ENCODE measurements at regions of chr1 and their contacts with region 1.

Region 1: GRCh38 chr1:221741711-221742554 is at the start of gene DUSP10:
- DNase-seq: peak; percentile 100
- H3K4me3 ChIP-seq: peak within 1 kb of the TSS; percentile 67 to 82 (median 70)
- H3K27ac ChIP-seq: peak within 1 kb of the TSS; percentile 96 to 99 (median 97)
- H3K4me1 ChIP-seq: peaks cover 0 to 45% (median 36%) of the 10 kb centered on the region in 4 donors
- H3K27me3 ChIP-seq: no peaks in the 10 kb centered on the region
- CTCF ChIP-seq: no peak
- EP300 ChIP-seq: peak in 2 of 4 donors; percentile 44 to 58
- POLR2A ChIP-seq: peak; percentile 88 to 95
- total RNA-seq, gene DUSP10: 11.4 to 19.9 (median 15.7) TPM

Region 2: GRCh38 chr1:221035680-221036153 is 706.2 kb before region 1 on chr1:
- intact Hi-C with region 1: loop called (anchors 10 kb)
- DNase-seq: no peak
- H3K4me3 ChIP-seq: no peak overlapping the region
- H3K27ac ChIP-seq: peak overlapping the region in 2 of 4 donors; percentile 33 to 38
- H3K4me1 ChIP-seq: peaks cover 0 to 47% (median 39%) of the 10 kb centered on the region in 4 donors
- H3K27me3 ChIP-seq: no peaks in the 10 kb centered on the region
- CTCF ChIP-seq: no peak
- EP300 ChIP-seq: no peak
- POLR2A ChIP-seq: no peak

Region 3: GRCh38 chr1:221478050-221478949 is 263.6 kb before region 1 on chr1:
- intact Hi-C with region 1: loop called (anchors 5 kb)
- DNase-seq: peak; percentile 78
- H3K4me3 ChIP-seq: no peak overlapping the region
- H3K27ac ChIP-seq: no peak overlapping the region
- H3K4me1 ChIP-seq: peaks cover 0 to 7% (median 0%) of the 10 kb centered on the region in 4 donors
- H3K27me3 ChIP-seq: no peaks in the 10 kb centered on the region
- CTCF ChIP-seq: peak; percentile 15 to 65 (median 30)
- EP300 ChIP-seq: no peak
- POLR2A ChIP-seq: no peak

Region 4: DNA sequence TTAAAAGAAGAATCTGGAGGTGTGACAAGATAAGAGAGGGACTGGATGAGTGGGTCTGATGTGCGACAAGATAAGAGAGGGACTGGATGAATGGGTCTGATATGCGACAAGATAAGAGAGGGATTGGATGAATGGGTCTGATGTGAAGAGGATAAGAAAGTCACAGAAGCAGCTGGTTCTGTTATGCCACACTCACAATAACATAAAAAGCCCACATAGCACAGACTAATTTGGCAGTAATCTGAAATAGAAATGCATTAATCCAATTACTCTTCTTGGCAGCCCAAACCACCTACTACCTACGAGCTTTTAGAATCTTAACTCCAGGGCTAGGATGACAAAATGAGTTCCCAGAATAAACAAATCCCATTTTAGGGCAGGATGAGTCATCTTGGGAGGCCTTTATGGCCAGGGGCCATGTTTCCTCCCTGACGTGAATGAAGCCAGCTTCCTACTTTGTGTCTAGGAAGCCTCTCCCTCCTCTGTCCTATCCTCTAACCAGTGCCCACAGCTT is 129.6 kb before region 1 on chr1:
- intact Hi-C with region 1: loop called (anchors 10 kb)
- DNase-seq: peak; percentile 86
- H3K4me3 ChIP-seq: no peak overlapping the region
- H3K27ac ChIP-seq: peak overlapping the region; percentile 15 to 55 (median 53)
- H3K4me1 ChIP-seq: peaks cover 0 to 13% (median 6%) of the 10 kb centered on the region in 4 donors
- H3K27me3 ChIP-seq: no peaks in the 10 kb centered on the region
- CTCF ChIP-seq: no peak
- EP300 ChIP-seq: no peak
- POLR2A ChIP-seq: no peak

Region 5: DNA sequence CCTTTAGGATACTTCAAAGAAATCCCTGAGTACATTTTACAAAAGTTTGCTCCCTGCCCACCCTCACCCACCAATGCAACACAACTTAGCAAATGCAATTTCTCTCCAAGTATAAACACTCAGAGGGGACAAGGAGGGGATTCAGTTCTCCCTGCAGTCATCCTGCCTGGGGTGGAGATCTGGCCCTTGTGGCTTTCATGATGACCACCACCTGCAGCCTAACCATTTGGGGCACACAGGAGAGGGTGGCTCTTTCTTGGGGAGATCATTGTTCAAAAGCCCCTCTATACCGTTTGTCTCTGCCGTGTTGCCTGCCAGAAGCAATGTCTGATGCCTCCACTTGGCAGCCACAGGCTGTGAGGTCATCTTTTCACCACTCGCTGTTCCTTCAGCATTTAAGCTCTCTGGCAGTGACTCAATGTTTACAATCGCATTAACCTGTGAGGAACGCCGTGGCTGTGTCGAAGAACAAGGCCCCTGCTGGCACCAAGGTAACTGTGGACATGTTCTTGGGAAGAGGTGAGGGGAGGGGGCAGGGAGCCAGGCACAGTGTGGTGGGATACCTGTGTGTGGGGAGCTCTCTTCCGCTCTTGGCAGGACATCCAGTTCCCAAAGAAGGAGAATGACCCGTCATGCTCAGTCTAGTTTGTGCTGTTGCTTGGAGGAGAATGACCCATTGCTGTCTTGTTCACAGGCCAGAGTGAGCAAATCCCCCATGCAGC is 103.9 kb after region 1 on chr1:
- intact Hi-C with region 1: loop called (anchors 5 kb)
- DNase-seq: peak; percentile 84
- H3K4me3 ChIP-seq: no peak overlapping the region
- H3K27ac ChIP-seq: peak overlapping the region; percentile 38 to 59 (median 52)
- H3K4me1 ChIP-seq: peaks cover 0 to 19% (median 10%) of the 10 kb centered on the region in 4 donors
- H3K27me3 ChIP-seq: no peaks in the 10 kb centered on the region
- CTCF ChIP-seq: no peak
- EP300 ChIP-seq: peak in 1 of 4 donors; percentile 37
- POLR2A ChIP-seq: no peak

Region 6: GRCh38 chr1:222171005-222171404 is 429.1 kb after region 1 on chr1:
- intact Hi-C with region 1: loop called (anchors 1 kb)
- DNase-seq: no peak
- H3K4me3 ChIP-seq: no peak overlapping the region
- H3K27ac ChIP-seq: no peak overlapping the region
- H3K4me1 ChIP-seq: no peaks in the 10 kb centered on the region
- H3K27me3 ChIP-seq: no peaks in the 10 kb centered on the region
- CTCF ChIP-seq: peak; percentile 33 to 56 (median 41)
- EP300 ChIP-seq: no peak
- POLR2A ChIP-seq: no peak

Measured in sigmoid colon (tissue), 7 donors.